Breast epithelium (tissue), 4 donors: ENCODE measurements at regions of chr9 and their contacts with region 1.

Region 1: DNA sequence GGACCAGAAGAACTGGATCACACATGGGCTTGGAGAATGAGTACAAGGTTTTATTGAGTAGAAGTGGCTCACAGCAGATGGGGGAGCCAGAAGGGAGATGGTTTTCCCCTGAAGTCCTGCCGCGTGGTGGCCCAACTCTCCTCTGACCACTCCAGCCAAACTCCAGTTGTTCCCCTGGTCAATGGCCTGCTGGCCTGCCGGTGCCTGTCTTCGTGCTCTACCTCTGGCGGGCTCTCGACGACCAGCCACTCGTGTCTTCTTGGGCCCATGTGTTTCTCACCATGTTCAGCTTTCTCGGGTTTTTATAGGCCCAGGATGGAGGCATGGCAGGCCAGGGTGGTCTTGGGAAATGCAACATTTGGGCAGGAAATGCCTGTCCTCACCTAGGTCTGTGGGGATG is 519.6 kb downstream of the CYLC2 start:
- DNase-seq: no peak
- H3K4me3 ChIP-seq: no peak overlapping the region
- H3K27ac ChIP-seq: no peak overlapping the region
- H3K4me1 ChIP-seq: no peaks in the 10 kb centered on the region
- H3K27me3 ChIP-seq: no peaks in the 10 kb centered on the region
- CTCF ChIP-seq: no peak
- POLR2A ChIP-seq: no peak

Region 2: GRCh38 chr9:103474156-103474555 is 40.6 kb before region 1 on chr9:
- intact Hi-C with region 1: loop called (anchors 2 kb)
- DNase-seq: no peak
- H3K4me3 ChIP-seq: no peak overlapping the region
- H3K27ac ChIP-seq: no peak overlapping the region
- H3K4me1 ChIP-seq: no peaks in the 10 kb centered on the region
- H3K27me3 ChIP-seq: no peaks in the 10 kb centered on the region
- CTCF ChIP-seq: no peak
- POLR2A ChIP-seq: no peak